Posterior vena cava (tissue), 2 donors: ENCODE measurements at regions of chr6 and their contacts with region 1.

Region 1: GRCh38 chr6:3061501-3061941 is 6.8 kb upstream of the RIPK1 start:
- DNase-seq: no peak

Region 2: GRCh38 chr6:3005874-3006273 is 55.6 kb before region 1 on chr6:
- intact Hi-C with region 1: loop called in 1 of 2 experiments (anchors 2 kb)
- DNase-seq: no peak